AG04450 (cell line): ENCODE measurements at regions of chr11 and their contacts with region 1.

Region 1: GRCh38 chr11:9972989-9973388 is 309.1 kb downstream of the SWAP70 start:
- DNase-seq: no peak
- H3K4me3 ChIP-seq: no peak overlapping the region
- H3K27ac ChIP-seq: no peak overlapping the region
- H3K27me3 ChIP-seq: no peaks in the 10 kb centered on the region
- CTCF ChIP-seq: peak; percentile 81

Region 2: GRCh38 chr11:9158898-9159391 is 814.0 kb before region 1 on chr11:
- CTCF ChIA-PET with region 1: no interaction called
- POLR2A ChIA-PET with region 1: no interaction called
- DNase-seq: no peak
- H3K4me3 ChIP-seq: no peak overlapping the region
- H3K27ac ChIP-seq: no peak overlapping the region
- H3K27me3 ChIP-seq: no peaks in the 10 kb centered on the region
- CTCF ChIP-seq: no peak

Region 3: DNA sequence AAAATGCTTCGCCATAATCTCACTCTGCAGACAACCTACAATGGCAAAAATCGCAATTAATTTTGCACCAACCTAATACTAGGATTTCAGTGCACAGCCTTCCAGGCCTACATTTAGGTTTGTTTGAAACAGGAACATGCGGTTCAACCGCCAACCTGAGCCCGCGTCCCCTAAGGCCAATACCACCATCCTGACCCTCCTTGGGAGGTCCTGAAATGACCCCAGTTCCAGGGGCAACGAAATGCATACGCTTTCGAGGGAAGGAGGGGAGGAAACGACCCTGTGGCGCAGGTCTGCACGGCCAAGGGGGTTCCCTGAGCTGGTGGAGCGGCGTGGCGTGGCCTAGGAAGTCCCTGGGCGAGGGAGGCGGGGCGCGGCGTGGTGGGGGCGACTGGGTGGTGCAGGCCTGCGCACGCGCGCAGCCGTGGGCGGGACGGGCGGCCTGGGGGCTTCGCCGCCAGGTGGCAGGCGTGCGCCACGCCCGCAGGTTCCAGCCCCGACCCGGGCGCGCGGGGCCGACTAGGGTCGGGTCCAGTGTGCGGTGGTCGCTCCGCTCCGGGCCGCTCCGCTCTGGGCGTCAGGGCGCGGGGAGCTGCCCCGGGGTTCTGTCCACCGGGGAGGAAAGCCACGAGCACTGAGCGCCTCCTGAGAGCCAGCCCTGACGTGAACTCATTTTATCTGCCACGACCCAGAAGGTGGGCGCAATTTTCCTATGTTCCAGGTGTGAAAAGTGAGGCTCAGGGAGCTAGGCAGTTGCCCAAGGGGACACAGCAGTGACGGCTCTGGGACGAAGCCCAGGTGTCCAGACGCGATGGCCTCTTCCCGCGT is 215.0 kb before region 1 on chr11:
- CTCF ChIA-PET with region 1: interaction called, 36 read pairs
- POLR2A ChIA-PET with region 1: no interaction called
- DNase-seq: no peak
- H3K4me3 ChIP-seq: peak overlapping the region; percentile 45
- H3K27ac ChIP-seq: peak overlapping the region; percentile 95
- H3K27me3 ChIP-seq: no peaks in the 10 kb centered on the region
- CTCF ChIP-seq: peak; percentile 51

Region 4: DNA sequence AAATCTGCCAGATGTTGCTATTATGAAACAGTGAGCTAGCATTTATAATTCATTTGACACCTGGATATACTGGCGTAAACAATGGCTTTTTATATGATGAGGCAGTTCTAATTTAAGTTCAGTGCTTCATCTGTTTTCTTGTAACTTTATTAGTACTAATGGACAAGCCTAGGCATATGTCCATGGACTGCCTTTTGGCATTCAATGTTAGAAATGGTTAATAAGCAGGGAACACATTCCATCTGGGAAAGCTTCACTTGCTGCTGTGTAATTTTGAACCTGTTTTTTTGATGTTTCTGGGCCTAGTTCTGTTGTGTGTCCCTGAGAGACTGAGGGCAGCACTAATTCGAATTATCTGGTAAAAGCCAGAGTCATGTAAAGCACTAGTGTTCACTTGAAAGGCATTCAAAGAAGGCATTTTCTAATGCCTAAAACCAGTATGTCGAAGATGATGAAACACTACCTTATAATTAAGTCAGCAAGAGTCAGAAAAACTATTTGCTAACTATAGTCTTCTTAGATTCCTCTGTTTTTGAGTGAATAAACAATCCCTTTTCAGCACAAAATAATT is 170.6 kb before region 1 on chr11:
- CTCF ChIA-PET with region 1: interaction called, 10 read pairs
- POLR2A ChIA-PET with region 1: no interaction called
- DNase-seq: peak; percentile 70
- H3K4me3 ChIP-seq: no peak overlapping the region
- H3K27ac ChIP-seq: peak overlapping the region; percentile 92
- H3K27me3 ChIP-seq: no peaks in the 10 kb centered on the region
- CTCF ChIP-seq: no peak

Region 5: GRCh38 chr11:9962722-9963121 is 10.3 kb before region 1 on chr11:
- CTCF ChIA-PET with region 1: interaction called, 14 read pairs
- POLR2A ChIA-PET with region 1: no interaction called
- DNase-seq: no peak
- H3K4me3 ChIP-seq: no peak overlapping the region
- H3K27ac ChIP-seq: no peak overlapping the region
- H3K27me3 ChIP-seq: no peaks in the 10 kb centered on the region
- CTCF ChIP-seq: no peak

Region 6: GRCh38 chr11:9982800-9983579 is 10.0 kb after region 1 on chr11:
- CTCF ChIA-PET with region 1: interaction called, 22 read pairs
- POLR2A ChIA-PET with region 1: interaction called, 3 read pairs
- DNase-seq: no peak
- H3K4me3 ChIP-seq: no peak overlapping the region
- H3K27ac ChIP-seq: no peak overlapping the region
- H3K27me3 ChIP-seq: no peaks in the 10 kb centered on the region
- CTCF ChIP-seq: no peak